SK-N-SH (cell line): ENCODE measurements at regions of chr17 and their contacts with region 1.

Region 1: GRCh38 chr17:7687908-7688807 is at the start of gene WRAP53:
- DNase-seq: peak; percentile 90
- H3K4me3 ChIP-seq: peak within 1 kb of the TSS; percentile 80 to 91
- H3K27ac ChIP-seq: peak within 1 kb of the TSS; percentile 97 to 98
- H3K4me1 ChIP-seq: peaks cover 12 to 17% of the 10 kb centered on the region in 2 experiments; a peak in 3 of 4 replicates
- H3K27me3 ChIP-seq: no peaks in the 10 kb centered on the region
- CTCF ChIP-seq: peak; percentile 99
- EP300 ChIP-seq: 0 out of 4 replicates have a peak, but pooled peaks of 1 of the 2 experiments have one; percentile 11
- RAD21 ChIP-seq: peak; percentile 79
- polyA plus RNA-seq, gene WRAP53: 6.6 and 8.6 TPM in 2 replicates

Region 2: DNA sequence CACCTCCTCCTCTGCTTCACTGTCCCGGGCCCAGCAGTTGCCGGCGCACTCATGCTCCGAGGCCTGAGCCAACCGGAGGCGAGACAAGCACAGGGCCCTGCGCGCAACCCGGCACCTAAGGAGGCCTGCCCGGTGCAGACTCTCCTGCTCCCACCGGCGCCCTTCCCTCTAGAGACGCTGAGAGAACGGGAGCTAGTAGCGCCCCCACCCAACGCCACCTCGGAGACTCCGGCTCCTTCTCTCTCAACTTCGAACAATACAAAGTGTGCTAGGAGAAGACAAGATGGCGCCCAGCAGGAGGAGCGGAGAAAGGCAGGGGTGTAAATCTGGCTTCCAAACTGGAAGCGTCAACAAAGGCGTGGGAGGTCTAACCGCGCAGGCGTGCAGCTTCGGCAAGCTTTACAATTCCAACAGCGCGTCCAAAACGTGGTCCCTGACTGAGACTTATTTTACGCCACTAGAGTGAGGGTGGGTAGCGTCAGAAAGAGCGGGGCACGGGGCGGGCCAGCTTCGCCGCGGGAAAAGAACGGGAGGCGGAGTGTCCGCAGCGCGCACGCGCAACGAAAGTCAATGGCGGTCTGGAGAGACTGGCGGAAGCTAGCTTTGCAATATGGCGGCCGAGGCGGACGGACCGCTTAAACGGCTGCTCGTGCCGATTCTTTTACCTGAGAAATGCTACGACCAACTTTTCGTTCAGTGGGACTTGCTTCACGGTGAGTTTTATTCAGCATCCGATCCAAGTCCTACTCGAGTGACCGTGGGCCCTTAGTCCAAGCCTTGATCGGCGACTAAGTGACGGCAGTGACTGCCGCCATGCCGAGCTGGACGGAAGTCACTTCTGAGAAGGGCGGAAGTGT is 104.7 kb before region 1 on chr17 and contains the start of gene MPDU1:
- CTCF ChIA-PET with region 1: interaction called, 19 read pairs
- POLR2A ChIA-PET with region 1: interaction called, 37 read pairs
- DNase-seq: peak; percentile 93
- H3K4me3 ChIP-seq: peak within 1 kb of the TSS; percentile 65 to 73
- H3K27ac ChIP-seq: peak within 1 kb of the TSS; percentile 97 to 98
- H3K4me1 ChIP-seq: peaks cover 22 to 32% of the 10 kb centered on the region in 2 experiments; a peak in 3 of 4 replicates
- H3K27me3 ChIP-seq: no peaks in the 10 kb centered on the region
- CTCF ChIP-seq: no peak
- EP300 ChIP-seq: no peak
- RAD21 ChIP-seq: no peak
- polyA plus RNA-seq, gene MPDU1: 126 and 142 TPM in 2 replicates

Region 3: DNA sequence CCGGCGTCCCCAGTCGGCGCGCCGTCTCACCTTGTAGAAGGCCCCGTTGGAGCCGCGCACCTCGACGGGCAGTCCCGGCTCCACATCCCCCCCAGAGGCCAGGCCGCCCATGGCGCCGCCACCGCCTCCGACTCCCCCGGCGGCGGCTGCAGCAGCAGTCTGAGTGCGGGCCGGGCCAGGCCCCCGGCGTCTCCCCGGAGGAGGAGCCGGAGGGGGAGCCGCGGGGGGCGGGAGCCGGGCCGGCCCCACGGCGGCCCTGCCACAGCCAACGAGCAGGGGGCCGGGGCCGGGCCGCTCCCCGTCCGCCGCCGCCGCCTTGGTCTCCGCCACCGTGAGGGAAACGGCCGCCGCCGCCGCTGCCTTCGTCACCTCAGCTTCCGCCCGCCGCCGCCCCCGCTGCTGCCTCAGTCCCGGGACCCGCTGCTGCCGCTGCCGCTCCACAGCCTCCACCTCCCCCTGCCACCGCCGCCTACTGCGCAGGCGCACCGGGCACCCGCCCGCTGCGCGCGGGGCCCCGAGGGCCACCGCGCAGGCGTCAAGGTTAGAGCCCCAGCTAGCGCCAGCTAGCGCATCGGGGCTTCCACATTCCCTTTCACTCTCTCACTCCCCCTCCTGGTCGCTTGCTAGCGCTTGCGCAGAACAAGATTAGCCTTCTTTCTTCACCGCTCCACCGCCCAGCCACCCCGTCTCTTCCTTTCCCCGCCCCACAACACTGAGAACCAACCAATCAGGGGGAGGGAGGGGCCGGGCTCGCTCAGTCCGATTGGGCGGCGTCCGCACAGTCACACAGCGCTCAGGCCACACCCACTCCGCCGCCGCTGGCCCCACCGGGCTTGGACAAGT is 73.5 kb before region 1 on chr17 and contains the start of gene FXR2:
- CTCF ChIA-PET with region 1: interaction called, 16 read pairs
- POLR2A ChIA-PET with region 1: interaction called, 19 read pairs
- DNase-seq: peak; percentile 99
- H3K4me3 ChIP-seq: peak within 1 kb of the TSS; percentile 77 to 90
- H3K27ac ChIP-seq: peak within 1 kb of the TSS; percentile 75 to 84
- H3K4me1 ChIP-seq: peaks cover 0 to 18% of the 10 kb centered on the region in 2 experiments; a peak in 3 of 4 replicates
- H3K27me3 ChIP-seq: no peaks in the 10 kb centered on the region
- CTCF ChIP-seq: peak; percentile 52
- EP300 ChIP-seq: peak in 1 of 2 experiments; percentile 35; a peak in 1 of 4 replicates
- RAD21 ChIP-seq: peak; percentile 36
- polyA plus RNA-seq, gene FXR2: 56.4 and 62.3 TPM in 2 replicates

Region 4: GRCh38 chr17:7632492-7632894 is 55.7 kb before region 1 on chr17:
- CTCF ChIA-PET with region 1: interaction called, 166 read pairs
- POLR2A ChIA-PET with region 1: interaction called, 37 read pairs
- DNase-seq: no peak
- H3K4me3 ChIP-seq: no peak overlapping the region; a peak in 1 of 4 replicates
- H3K27ac ChIP-seq: no peak overlapping the region
- H3K4me1 ChIP-seq: peaks cover 0 to 12% of the 10 kb centered on the region in 2 experiments; a peak in 1 of 4 replicates
- H3K27me3 ChIP-seq: no peaks in the 10 kb centered on the region
- CTCF ChIP-seq: peak; percentile 51
- EP300 ChIP-seq: no peak
- RAD21 ChIP-seq: peak; percentile 43

Region 5: GRCh38 chr17:7673239-7673638 is 14.9 kb before region 1 on chr17:
- CTCF ChIA-PET with region 1: interaction called, 47 read pairs
- POLR2A ChIA-PET with region 1: interaction called, 5 read pairs
- DNase-seq: no peak
- H3K4me3 ChIP-seq: no peak overlapping the region; a peak in 1 of 4 replicates
- H3K27ac ChIP-seq: no peak overlapping the region
- H3K4me1 ChIP-seq: no peaks in the 10 kb centered on the region
- H3K27me3 ChIP-seq: no peaks in the 10 kb centered on the region
- CTCF ChIP-seq: peak; percentile 56
- EP300 ChIP-seq: no peak
- RAD21 ChIP-seq: peak; percentile 29; the same call in 1 of the 2 replicates

Region 6: DNA sequence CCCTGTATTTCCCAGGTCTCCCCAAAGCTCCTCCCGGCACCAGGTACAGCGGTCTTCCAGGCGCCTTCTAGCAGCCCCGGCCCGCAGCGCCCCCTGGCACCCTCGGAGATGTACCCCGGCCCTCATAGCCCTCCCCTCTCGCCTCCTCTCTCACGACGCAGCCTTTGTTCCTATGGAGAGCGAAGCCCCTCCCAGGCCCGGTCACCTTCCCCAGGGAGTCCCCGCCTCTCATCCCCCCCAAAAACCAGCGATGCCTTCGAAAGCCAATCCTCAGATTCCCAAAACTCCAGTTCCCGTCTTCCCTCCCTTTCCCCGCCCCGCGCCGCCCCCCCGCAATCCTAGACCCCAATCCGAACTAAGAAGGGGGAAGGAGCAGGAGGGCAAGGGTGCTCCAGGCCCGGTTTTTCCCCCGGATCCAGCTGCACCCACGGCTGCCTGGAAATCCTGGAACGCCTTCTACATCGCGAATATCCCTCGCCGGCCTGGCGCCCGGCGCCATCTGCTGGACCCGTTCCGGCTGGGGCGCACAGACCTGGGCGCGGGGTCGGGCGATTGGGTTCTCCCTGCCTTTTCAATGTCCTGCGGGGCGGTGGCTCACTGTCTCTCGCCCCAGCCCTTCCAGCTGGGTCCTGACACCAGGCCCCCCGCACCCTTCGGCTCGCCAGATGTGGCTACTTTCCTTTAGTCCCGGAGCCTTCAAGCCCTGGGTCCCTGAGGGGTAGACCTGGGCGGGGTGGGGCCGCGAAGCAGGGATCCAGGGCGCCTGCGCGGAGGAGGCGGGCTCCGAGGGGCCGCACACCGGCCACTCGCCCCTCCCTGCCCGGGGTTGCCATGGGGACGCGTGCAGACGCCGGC is 29.0 kb after region 1 on chr17 and contains the start of gene DNAH2:
- CTCF ChIA-PET with region 1: interaction called, 82 read pairs
- POLR2A ChIA-PET with region 1: interaction called, 11 read pairs
- DNase-seq: peak; percentile 97
- H3K4me3 ChIP-seq: peak within 1 kb of the TSS; percentile 72 to 92
- H3K27ac ChIP-seq: peak within 1 kb of the TSS; percentile 61 to 90; a peak in 3 of 4 replicates
- H3K4me1 ChIP-seq: peaks cover 3 to 22% of the 10 kb centered on the region in 2 experiments; a peak in 1 of 4 replicates
- H3K27me3 ChIP-seq: no peaks in the 10 kb centered on the region
- CTCF ChIP-seq: peak; percentile 58
- EP300 ChIP-seq: peak; percentile 7 to 42; a peak in 1 of 4 replicates
- RAD21 ChIP-seq: peak; percentile 45
- polyA plus RNA-seq, gene DNAH2: 0.13 and 0.18 TPM in 2 replicates

Region 7: GRCh38 chr17:7862692-7863437 is 174.7 kb after region 1 on chr17:
- CTCF ChIA-PET with region 1: no interaction called
- POLR2A ChIA-PET with region 1: no interaction called
- DNase-seq: peak; percentile 71
- H3K4me3 ChIP-seq: no peak overlapping the region; a peak in 1 of 4 replicates
- H3K27ac ChIP-seq: peak overlapping the region in 1 of 2 experiments; percentile 39; a peak in 1 of 4 replicates
- H3K4me1 ChIP-seq: peaks cover 9 to 19% of the 10 kb centered on the region in 2 experiments; a peak in 2 of 4 replicates
- H3K27me3 ChIP-seq: no peaks in the 10 kb centered on the region
- CTCF ChIP-seq: peak; percentile 87
- EP300 ChIP-seq: no peak
- RAD21 ChIP-seq: peak; percentile 87